Tibial artery (tissue), 4 donors: ENCODE measurements at regions of chr1 and their contacts with region 1.

Region 1: DNA sequence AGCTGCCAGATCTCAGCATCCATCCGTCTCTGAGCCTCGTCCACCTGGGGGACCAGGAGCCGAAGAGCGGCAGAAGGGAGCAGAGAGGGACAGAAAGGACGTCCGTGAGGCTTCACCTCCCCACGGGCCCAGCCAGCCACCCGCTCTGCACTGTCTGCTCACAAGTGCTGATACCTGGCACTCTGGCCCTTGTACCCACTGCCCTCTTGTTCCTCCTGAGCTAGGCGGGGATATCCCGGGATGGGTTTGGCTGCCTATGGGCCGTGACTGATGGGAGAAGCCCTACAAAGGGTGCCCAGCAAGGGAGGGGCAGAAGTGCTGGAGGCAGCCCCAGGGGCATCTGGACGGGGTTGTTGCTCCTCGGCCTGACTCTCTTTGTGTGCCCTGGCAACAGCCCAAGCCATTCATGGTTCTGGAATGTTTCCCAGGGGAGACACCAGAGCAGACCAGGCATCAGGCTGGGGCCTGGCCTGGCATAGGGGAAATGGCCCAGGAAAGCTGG is 57.6 kb downstream of the LDLRAD2 start:
- DNase-seq: peak; percentile 93 to 97
- H3K4me3 ChIP-seq: no peak overlapping the region
- H3K27ac ChIP-seq: peak overlapping the region; percentile 78 to 79
- H3K4me1 ChIP-seq: peaks cover 0 to 42% (median 27%) of the 10 kb centered on the region in 4 donors
- H3K27me3 ChIP-seq: no peaks in the 10 kb centered on the region
- CTCF ChIP-seq: no peak

Region 2: GRCh38 chr1:21834094-21834493 is 35.6 kb before region 1 on chr1:
- intact Hi-C with region 1: no loop called
- DNase-seq: no peak
- H3K4me3 ChIP-seq: no peak overlapping the region
- H3K27ac ChIP-seq: no peak overlapping the region
- H3K4me1 ChIP-seq: no peaks in the 10 kb centered on the region
- H3K27me3 ChIP-seq: no peaks in the 10 kb centered on the region
- CTCF ChIP-seq: no peak

Region 3: GRCh38 chr1:21956720-21957552 is 87.3 kb after region 1 on chr1:
- intact Hi-C with region 1: loop called (anchors 5 kb)
- DNase-seq: peak; percentile 56 to 85
- H3K4me3 ChIP-seq: no peak overlapping the region
- H3K27ac ChIP-seq: peak overlapping the region; percentile 81 to 82
- H3K4me1 ChIP-seq: peaks cover 0 to 32% (median 26%) of the 10 kb centered on the region in 4 donors
- H3K27me3 ChIP-seq: no peaks in the 10 kb centered on the region
- CTCF ChIP-seq: no peak